Caco-2 (cell line): ENCODE measurements at regions of chr7 and their contacts with region 1.

Region 1: GRCh38 chr7:33185786-33186185 is 56.4 kb downstream of the BBS9 start:
- DNase-seq: peak in 1 of 2 experiments; percentile 41
- H3K4me3 ChIP-seq: no peak overlapping the region
- H3K4me3 Mint-ChIP-seq: no peak overlapping the region
- H3K27ac Mint-ChIP-seq: no peak overlapping the region
- H3K4me1 ChIP-seq: no peaks in the 10 kb centered on the region
- H3K4me1 Mint-ChIP-seq: no peaks in the 10 kb centered on the region
- H3K27me3 ChIP-seq: no peaks in the 10 kb centered on the region
- H3K27me3 Mint-ChIP-seq: peaks cover 2% of the 10 kb centered on the region
- CTCF ChIP-seq: peak; percentile 55 to 68

Region 2: DNA sequence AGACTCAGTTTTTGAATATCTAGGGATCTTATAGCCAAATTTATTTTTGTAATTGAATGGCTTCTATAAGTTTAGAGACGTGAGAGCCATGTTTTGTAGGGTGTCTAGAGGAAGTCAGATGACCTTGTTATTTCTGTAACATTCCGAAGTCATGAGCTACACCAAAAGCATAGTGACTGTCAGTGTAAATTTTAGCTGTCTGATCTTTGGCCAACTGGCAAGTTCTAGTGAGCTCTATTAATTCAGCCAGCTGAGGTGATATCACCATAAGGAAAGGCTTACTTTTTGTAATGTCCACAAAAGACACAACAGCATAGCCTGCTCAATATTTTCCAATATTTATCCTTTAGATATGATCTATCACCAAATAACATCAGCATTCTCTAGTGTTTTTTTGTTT is 113.3 kb before region 1 on chr7:
- CTCF ChIA-PET with region 1: no interaction called
- POLR2A ChIA-PET with region 1: no interaction called
- intact Hi-C with region 1: no loop called
- DNase-seq: no peak
- H3K4me3 ChIP-seq: no peak overlapping the region
- H3K4me3 Mint-ChIP-seq: no peak overlapping the region
- H3K27ac Mint-ChIP-seq: no peak overlapping the region
- H3K4me1 ChIP-seq: no peaks in the 10 kb centered on the region; the same call in 1 of the 2 replicates
- H3K4me1 Mint-ChIP-seq: no peaks in the 10 kb centered on the region
- H3K27me3 ChIP-seq: no peaks in the 10 kb centered on the region
- H3K27me3 Mint-ChIP-seq: peaks cover 3% of the 10 kb centered on the region
- CTCF ChIP-seq: no peak

Region 3: DNA sequence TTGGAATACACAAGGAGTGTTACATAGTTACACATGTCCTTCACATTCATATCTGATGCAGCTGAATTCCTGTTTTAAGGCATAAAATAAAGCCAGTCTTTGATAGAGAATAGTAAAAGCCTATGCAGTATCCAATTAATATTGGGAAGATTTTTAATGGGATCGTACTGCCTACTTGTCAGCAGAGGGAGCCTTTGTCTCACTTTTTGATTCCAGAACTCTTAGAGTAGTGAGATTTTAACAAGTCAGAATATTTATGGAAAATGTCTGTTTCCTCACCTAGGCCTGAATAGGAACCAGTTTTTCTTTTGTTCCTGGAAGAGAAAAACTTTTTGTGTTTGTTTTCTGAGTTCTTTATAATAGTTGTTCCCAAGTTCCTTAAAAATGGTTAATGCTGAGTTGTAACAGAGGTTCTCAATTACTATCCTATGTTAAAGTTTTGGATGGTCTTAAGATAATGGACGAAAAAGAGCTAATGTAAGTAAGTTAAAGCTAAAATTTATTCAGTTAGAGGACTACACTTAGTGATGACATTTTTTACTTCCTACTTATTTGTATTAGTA is 57.6 kb after region 1 on chr7:
- CTCF ChIA-PET with region 1: no interaction called
- POLR2A ChIA-PET with region 1: no interaction called
- intact Hi-C with region 1: loop called (anchors 1 kb)
- DNase-seq: peak in 1 of 2 experiments; percentile 15
- H3K4me3 ChIP-seq: no peak overlapping the region
- H3K4me3 Mint-ChIP-seq: no peak overlapping the region
- H3K27ac Mint-ChIP-seq: no peak overlapping the region
- H3K4me1 ChIP-seq: no peaks in the 10 kb centered on the region
- H3K4me1 Mint-ChIP-seq: no peaks in the 10 kb centered on the region
- H3K27me3 ChIP-seq: no peaks in the 10 kb centered on the region
- H3K27me3 Mint-ChIP-seq: peaks cover 3% of the 10 kb centered on the region
- CTCF ChIP-seq: peak; percentile 56 to 68

Region 4: DNA sequence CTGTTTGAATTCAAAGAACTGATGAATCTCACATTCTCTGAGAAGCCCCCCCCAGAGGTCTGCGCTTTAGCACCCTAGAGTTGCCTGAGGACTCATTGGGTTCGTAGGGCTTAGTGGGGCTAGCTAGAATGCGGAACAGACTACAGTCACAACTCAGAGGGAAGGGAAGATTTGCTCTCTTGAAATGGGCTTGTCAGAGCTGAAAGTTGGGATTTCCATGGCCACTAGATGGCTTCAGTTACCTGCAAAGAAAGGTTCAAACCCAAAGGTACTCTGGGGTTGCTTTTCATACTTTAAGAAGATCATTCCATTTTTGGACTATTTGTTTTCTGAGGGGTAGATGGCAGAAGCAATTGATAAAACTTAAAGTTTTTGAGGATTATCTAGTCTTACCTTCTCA is 148.6 kb after region 1 on chr7:
- CTCF ChIA-PET with region 1: no interaction called
- POLR2A ChIA-PET with region 1: no interaction called
- intact Hi-C with region 1: loop called (anchors 5 kb)
- DNase-seq: peak in 1 of 2 experiments; percentile 33
- H3K4me3 ChIP-seq: no peak overlapping the region
- H3K4me3 Mint-ChIP-seq: no peak overlapping the region
- H3K27ac Mint-ChIP-seq: no peak overlapping the region
- H3K4me1 ChIP-seq: no peaks in the 10 kb centered on the region
- H3K4me1 Mint-ChIP-seq: no peaks in the 10 kb centered on the region
- H3K27me3 ChIP-seq: no peaks in the 10 kb centered on the region; the same call in 1 of the 2 replicates
- H3K27me3 Mint-ChIP-seq: peaks cover 8% of the 10 kb centered on the region
- CTCF ChIP-seq: peak; percentile 30 to 58

Region 5: DNA sequence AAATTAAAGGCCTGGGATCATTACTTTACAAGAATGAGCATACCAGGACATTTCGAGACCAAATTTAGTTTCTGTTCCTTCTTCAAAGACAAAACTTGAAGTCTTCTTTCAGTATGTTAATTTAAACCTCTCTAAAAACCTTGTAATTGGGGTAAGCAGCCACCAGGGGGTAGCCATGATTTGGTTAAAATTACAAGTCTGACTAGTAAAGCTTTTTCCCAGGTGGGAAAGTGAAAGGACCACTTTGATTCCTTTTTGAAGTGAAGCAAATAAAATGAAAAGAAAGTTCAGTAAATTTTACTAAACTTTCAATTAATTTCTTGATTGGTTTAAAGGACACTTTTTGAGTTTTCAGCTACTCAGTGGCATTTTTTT is 237.8 kb after region 1 on chr7:
- CTCF ChIA-PET with region 1: no interaction called
- POLR2A ChIA-PET with region 1: no interaction called
- intact Hi-C with region 1: loop called (anchors 5 kb)
- DNase-seq: peak in 1 of 2 experiments; percentile 15
- H3K4me3 ChIP-seq: no peak overlapping the region
- H3K4me3 Mint-ChIP-seq: no peak overlapping the region
- H3K27ac Mint-ChIP-seq: no peak overlapping the region
- H3K4me1 ChIP-seq: no peaks in the 10 kb centered on the region
- H3K4me1 Mint-ChIP-seq: no peaks in the 10 kb centered on the region
- H3K27me3 ChIP-seq: no peaks in the 10 kb centered on the region
- H3K27me3 Mint-ChIP-seq: peaks cover 2% of the 10 kb centered on the region
- CTCF ChIP-seq: peak; percentile 22 to 40

Region 6: GRCh38 chr7:33459340-33459751 is 273.6 kb after region 1 on chr7:
- CTCF ChIA-PET with region 1: no interaction called
- POLR2A ChIA-PET with region 1: no interaction called
- intact Hi-C with region 1: loop called (anchors 1 kb)
- DNase-seq: peak in 1 of 2 experiments; percentile 20
- H3K4me3 ChIP-seq: no peak overlapping the region
- H3K4me3 Mint-ChIP-seq: no peak overlapping the region
- H3K27ac Mint-ChIP-seq: no peak overlapping the region
- H3K4me1 ChIP-seq: no peaks in the 10 kb centered on the region
- H3K4me1 Mint-ChIP-seq: no peaks in the 10 kb centered on the region
- H3K27me3 ChIP-seq: no peaks in the 10 kb centered on the region
- H3K27me3 Mint-ChIP-seq: no peaks in the 10 kb centered on the region
- CTCF ChIP-seq: peak; percentile 51 to 64

Region 7: DNA sequence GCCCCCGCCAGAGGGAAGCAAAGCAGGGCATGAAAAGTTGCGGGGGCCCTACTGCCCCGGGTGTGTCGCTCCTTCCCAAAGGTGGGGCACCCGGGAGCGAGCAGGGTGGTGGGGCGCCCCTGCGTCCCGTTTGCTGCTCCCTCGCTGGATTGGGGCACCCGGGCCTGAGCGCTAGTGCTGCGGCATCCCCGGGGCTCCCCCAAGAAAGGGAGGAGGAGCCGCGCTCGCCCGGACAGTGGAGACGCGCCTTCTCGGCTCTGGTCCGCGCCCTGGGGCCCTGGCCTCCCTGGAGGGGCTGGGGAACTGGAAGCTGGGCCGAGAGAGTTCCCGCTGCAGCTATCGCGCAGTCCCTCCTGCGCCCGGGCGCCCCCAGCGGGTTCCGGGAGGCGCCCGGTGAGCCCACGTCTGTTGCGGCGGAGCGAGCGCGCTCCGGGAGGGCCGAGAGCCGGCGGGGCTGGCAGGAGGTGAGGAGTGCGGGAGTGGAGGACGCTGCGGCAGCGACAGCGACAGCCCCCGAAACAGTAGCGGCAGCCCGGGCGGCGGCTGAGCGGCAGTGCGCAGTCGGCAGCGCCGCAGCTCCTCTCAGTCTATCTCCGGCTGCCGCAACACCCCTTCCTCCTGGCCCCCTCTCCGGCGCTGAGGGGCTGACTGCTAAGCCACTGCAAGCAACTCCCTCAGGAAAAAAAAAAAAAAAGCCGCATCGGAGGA is 719.0 kb after region 1 on chr7:
- CTCF ChIA-PET with region 1: no interaction called
- POLR2A ChIA-PET with region 1: no interaction called
- intact Hi-C with region 1: loop called (anchors 10 kb)
- DNase-seq: peak in 1 of 2 experiments; percentile 34
- H3K4me3 ChIP-seq: peak overlapping the region; percentile 37
- H3K4me3 Mint-ChIP-seq: peak overlapping the region; percentile 72
- H3K27ac Mint-ChIP-seq: no peak overlapping the region
- H3K4me1 ChIP-seq: 0 out of 2 replicates have a peak, but pooled peaks cover 3% of the 10 kb centered on the region
- H3K4me1 Mint-ChIP-seq: no peaks in the 10 kb centered on the region
- H3K27me3 ChIP-seq: 0 out of 2 replicates have a peak, but pooled peaks cover 2% of the 10 kb centered on the region
- H3K27me3 Mint-ChIP-seq: peaks cover 35% of the 10 kb centered on the region
- CTCF ChIP-seq: no peak